ENCODE measurements at regions of chr1 and their contacts with region 1.

Region 1: GRCh38 chr1:19582302-19582701 is 61.8 kb upstream of the NBL1 start:
- DNase-seq: peak; percentile 71
- H3K4me3 Mint-ChIP-seq: no peak overlapping the region
- H3K27ac Mint-ChIP-seq: no peak overlapping the region
- H3K4me1 Mint-ChIP-seq: no peaks in the 10 kb centered on the region
- H3K27me3 Mint-ChIP-seq: peaks cover 16% of the 10 kb centered on the region
- CTCF ChIP-seq: peak; percentile 57

Region 2: DNA sequence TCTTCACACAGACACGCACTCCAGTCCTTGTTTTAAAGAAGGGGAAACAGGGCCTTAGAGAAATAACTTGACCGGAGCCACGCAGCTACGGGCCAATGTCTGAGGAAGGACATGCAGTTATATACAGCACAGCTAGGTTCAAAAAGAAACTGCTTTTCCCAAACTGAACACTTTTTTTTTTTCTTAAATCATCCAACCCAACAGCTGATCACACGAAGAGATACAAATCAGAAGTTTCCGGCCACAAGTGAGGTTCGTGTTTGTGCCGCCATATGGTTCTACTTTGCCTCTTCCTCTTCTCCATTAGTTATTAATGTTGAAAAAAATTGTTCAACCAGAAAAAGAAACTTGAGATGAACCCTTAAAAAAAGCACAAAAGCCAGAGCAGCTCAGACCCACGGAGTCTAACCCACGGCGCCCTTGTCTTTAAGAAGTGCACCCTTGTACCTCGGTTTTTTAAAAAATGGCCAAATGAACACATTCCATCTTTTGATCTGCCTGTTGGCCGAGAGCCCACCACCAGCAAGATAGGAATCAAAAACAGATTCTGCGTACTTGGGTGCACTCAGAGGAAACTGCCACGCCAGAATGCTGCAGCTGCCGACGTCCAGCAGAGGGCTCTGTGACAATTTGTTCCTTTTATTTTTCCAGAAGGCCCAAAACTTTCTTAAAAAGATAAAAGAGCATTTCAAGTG is 191.3 kb before region 1 on chr1:
- CTCF ChIA-PET with region 1: interaction called, 7 read pairs
- POLR2A ChIA-PET with region 1: no interaction called
- intact Hi-C with region 1: loop called (anchors 1 kb)
- DNase-seq: peak; percentile 43
- H3K4me3 Mint-ChIP-seq: no peak overlapping the region
- H3K27ac Mint-ChIP-seq: no peak overlapping the region
- H3K4me1 Mint-ChIP-seq: peaks cover 26% of the 10 kb centered on the region
- H3K27me3 Mint-ChIP-seq: no peaks in the 10 kb centered on the region
- CTCF ChIP-seq: peak; percentile 75

Region 3: DNA sequence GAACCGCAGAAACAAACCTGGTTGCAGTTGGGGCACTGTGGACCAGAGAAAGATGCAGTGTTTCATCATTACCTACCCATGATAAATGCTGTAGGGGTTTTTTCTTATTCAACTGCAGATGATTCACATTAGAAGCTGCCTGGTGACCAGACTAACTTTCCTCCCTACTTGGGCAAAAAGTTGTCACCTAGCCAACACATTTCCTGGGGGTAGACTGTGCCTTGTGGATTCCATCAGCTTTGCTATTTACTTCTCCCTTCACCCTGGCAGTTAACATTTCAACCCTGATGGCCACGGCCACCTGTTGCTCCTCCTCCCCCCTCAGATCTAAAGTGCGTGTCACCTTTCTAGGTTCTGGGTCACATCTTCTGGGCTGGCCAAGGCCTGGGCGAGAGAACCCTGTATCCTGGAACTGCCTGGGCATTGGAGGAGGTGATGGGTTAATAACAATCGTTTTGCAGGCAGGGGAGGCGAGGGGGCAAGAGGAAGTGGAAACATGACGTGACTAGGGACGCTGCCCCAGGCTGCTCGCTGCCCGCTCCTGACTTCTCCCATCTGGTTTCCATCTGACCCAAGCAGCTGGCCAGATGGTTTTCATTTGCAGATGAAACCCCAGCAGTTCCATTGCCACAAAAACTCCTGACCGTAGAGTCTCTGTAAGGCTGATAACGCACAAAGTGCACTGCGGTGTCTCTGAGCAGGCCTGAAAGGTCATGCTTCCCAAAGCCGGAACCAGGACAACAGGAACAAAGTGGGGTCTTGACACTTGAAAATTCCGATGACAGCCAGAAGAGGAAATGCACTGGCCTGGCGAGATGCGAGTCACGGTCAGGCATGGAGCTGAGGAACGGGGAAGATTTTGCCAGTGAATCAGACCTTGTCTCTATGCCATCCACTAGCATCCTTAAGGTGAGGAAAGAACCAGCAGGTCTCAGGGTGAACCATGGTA is 133.5 kb before region 1 on chr1:
- CTCF ChIA-PET with region 1: no interaction called
- POLR2A ChIA-PET with region 1: no interaction called
- intact Hi-C with region 1: no loop called
- DNase-seq: peak; percentile 83
- H3K4me3 Mint-ChIP-seq: no peak overlapping the region
- H3K27ac Mint-ChIP-seq: no peak overlapping the region
- H3K4me1 Mint-ChIP-seq: peaks cover 62% of the 10 kb centered on the region
- H3K27me3 Mint-ChIP-seq: no peaks in the 10 kb centered on the region
- CTCF ChIP-seq: no peak